ENCODE measurements at regions of chr7 and their contacts with region 1.

Region 1: GRCh38 chr7:67371429-67372305 is 375.0 kb downstream of the TYW1 start:
- DNase-seq: peak; percentile 45 to 62 (median 50)
- H3K4me3 ChIP-seq: no peak overlapping the region
- H3K4me3 Mint-ChIP-seq: no peak overlapping the region
- H3K27ac ChIP-seq: no peak overlapping the region
- H3K27ac Mint-ChIP-seq: no peak overlapping the region
- H3K4me1 ChIP-seq: no peaks in the 10 kb centered on the region
- H3K4me1 Mint-ChIP-seq: peaks cover 0 to 5% (median 4%) of the 10 kb centered on the region in 4 donors
- H3K27me3 ChIP-seq: no peaks in the 10 kb centered on the region
- H3K27me3 Mint-ChIP-seq: peaks cover 11 to 16% of the 10 kb centered on the region in 2 donors

Region 2: DNA sequence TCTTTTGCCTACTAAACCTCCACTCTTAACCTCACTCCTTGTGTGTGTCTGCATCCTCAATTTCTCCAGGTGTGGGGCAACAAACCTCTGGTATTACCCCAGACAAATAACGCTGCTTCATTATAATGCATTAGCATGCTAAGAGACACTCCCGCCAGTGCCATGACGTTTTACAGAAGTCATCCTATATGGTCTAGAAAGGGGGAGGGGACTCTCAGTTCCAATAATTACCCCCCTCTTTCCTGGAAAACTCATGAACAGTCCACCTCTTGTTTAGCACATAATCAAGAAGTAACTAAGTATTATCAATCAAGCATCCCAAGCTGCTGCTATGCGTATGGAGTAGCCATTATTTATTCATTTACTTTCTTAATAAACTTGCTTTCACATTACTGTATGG is 10.5 kb before region 1 on chr7:
- CTCF ChIA-PET with region 1: interaction called, 13 read pairs
- POLR2A ChIA-PET with region 1: no interaction called
- intact Hi-C with region 1: no loop called
- DNase-seq: no peak
- H3K4me3 ChIP-seq: no peak overlapping the region
- H3K4me3 Mint-ChIP-seq: no peak overlapping the region
- H3K27ac ChIP-seq: no peak overlapping the region
- H3K27ac Mint-ChIP-seq: no peak overlapping the region
- H3K4me1 ChIP-seq: no peaks in the 10 kb centered on the region
- H3K4me1 Mint-ChIP-seq: no peaks in the 10 kb centered on the region
- H3K27me3 ChIP-seq: no peaks in the 10 kb centered on the region
- H3K27me3 Mint-ChIP-seq: peaks cover 0 to 2% of the 10 kb centered on the region in 2 donors

Measured in CD4-positive, alpha-beta memory T cell (primary cell).